ENCODE measurements at regions of chr17 and their contacts with region 1.

Region 1: GRCh38 chr17:45021607-45022287 is 29.7 kb downstream of the DCAKD start:
- DNase-seq: no peak
- H3K4me3 ChIP-seq: peak overlapping the region; percentile 54
- H3K27ac ChIP-seq: peak overlapping the region; percentile 11
- H3K27me3 ChIP-seq: peaks cover 6% of the 10 kb centered on the region
- CTCF ChIP-seq: peak; percentile 56

Region 2: DNA sequence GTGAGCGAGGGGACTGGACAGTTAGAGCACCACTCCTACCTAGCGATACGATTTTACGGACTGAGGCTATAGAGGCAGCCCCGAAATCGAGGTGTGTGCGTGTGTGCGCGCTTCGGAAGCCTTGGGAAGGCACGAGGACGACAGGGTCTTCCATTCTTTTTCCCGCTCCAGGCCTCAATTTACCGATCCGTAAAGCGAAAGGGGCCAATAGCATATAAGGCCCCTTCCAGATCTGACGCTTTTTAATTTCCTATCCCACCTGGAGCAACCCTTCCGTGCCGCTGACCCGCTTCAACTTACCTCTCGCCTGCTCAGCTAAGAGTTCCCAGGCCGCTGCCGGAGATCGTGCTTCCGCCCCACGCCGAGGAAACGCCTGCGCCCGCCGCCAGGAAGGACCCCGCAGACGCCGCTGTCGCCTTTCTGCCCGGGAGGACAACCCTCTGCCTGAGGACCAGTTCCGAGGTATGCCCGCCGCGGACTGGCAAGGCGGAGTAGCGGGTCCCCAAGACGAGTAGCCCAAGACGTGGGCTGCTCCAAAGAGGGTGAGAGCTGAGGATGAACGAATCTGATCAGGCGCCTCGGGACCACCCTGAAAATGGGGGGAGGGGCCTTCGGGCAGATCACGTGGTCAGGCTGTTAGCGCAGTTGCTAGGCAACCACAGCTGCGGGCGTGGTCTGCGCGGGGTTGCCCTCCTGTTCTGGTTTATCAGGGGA is 122.5 kb before region 1 on chr17 and contains the start of gene EFTUD2:
- CTCF ChIA-PET with region 1: interaction called, 50 read pairs
- POLR2A ChIA-PET with region 1: no interaction called
- DNase-seq: peak; percentile 74
- H3K4me3 ChIP-seq: peak within 1 kb of the TSS; percentile 98
- H3K27ac ChIP-seq: peak within 1 kb of the TSS; percentile 94
- H3K27me3 ChIP-seq: no peaks in the 10 kb centered on the region
- CTCF ChIP-seq: no peak
- polyA plus RNA-seq, gene EFTUD2: 123 and 147 TPM in 2 replicates

Region 3: GRCh38 chr17:44919885-44920564 is 101.7 kb before region 1 on chr17:
- CTCF ChIA-PET with region 1: interaction called, 244 read pairs
- POLR2A ChIA-PET with region 1: interaction called, 7 read pairs
- DNase-seq: peak; percentile 55
- H3K4me3 ChIP-seq: no peak overlapping the region
- H3K27ac ChIP-seq: no peak overlapping the region
- H3K27me3 ChIP-seq: no peaks in the 10 kb centered on the region
- CTCF ChIP-seq: peak; percentile 87

Region 4: GRCh38 chr17:45038728-45039634 is 17.2 kb after region 1 on chr17:
- CTCF ChIA-PET with region 1: interaction called, 33 read pairs
- POLR2A ChIA-PET with region 1: no interaction called
- DNase-seq: no peak
- H3K4me3 ChIP-seq: no peak overlapping the region
- H3K27ac ChIP-seq: no peak overlapping the region
- H3K27me3 ChIP-seq: no peaks in the 10 kb centered on the region
- CTCF ChIP-seq: no peak

Region 5: GRCh38 chr17:45092932-45093430 is 71.2 kb after region 1 on chr17:
- CTCF ChIA-PET with region 1: interaction called, 11 read pairs
- POLR2A ChIA-PET with region 1: no interaction called
- DNase-seq: peak; percentile 97
- H3K4me3 ChIP-seq: no peak overlapping the region
- H3K27ac ChIP-seq: peak overlapping the region; percentile 98
- H3K27me3 ChIP-seq: no peaks in the 10 kb centered on the region
- CTCF ChIP-seq: no peak

Measured in AG04450 (cell line).